ENCODE measurements at regions of chr3 and their contacts with region 1.

Region 1: GRCh38 chr3:197906023-197906849 is 43.8 kb upstream of the RPL35A start:
- DNase-seq: peak; percentile 93
- H3K4me3 Mint-ChIP-seq: peak overlapping the region; percentile 41
- H3K27ac Mint-ChIP-seq: peak overlapping the region; percentile 91
- H3K4me1 Mint-ChIP-seq: peaks cover 21% of the 10 kb centered on the region
- H3K27me3 Mint-ChIP-seq: no peaks in the 10 kb centered on the region

Region 2: DNA sequence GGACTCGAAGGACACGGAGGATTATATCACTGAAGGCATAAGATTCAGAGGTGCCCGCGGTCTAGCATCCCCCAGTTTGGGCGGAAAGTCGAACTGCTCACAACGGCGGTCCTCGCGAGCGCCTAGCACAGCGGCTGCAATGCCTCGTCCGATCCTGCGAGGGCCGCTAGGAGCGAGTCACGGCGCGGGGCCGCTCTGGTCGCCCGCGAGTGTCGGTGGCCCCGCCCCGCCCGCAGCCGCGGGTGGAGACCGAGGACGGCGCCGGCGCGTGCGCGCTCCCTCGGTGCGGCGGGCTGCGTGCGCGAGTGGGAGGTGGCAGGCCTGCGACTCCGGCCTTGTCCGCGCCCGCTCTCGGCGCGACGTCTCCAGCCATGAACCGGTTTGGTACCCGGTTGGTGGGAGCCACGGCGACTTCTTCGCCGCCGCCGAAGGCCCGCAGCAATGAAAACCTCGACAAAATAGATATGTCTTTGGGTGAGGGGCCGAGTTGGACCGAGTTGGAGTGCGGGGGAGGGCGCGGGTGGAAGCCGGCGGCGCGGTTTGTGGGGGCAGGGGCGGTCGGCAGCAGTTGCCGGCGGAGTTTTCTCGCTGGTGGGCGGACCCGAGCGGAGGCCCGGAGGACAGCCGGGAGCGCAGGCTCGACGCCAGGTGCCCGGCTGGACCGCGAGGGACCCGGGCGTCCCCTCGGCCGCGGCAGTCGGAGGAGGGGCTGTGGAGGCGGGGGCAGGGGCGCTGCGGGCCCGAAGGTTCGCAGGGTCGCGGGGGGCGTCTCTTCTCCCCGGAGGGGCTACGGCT is 156.4 kb before region 1 on chr3 and contains the start of gene FYTTD1:
- intact Hi-C with region 1: loop called (anchors 2 kb)
- DNase-seq: peak; percentile 97
- H3K4me3 Mint-ChIP-seq: peak within 1 kb of the TSS; percentile 92
- H3K27ac Mint-ChIP-seq: peak within 1 kb of the TSS; percentile 96
- H3K4me1 Mint-ChIP-seq: peaks cover 31% of the 10 kb centered on the region
- H3K27me3 Mint-ChIP-seq: peaks cover 4% of the 10 kb centered on the region
- total RNA-seq, gene FYTTD1: 53.2 and 56.8 TPM in 2 replicates

Region 3: GRCh38 chr3:197926418-197926817 is 20.2 kb after region 1 on chr3:
- intact Hi-C with region 1: loop called (anchors 1 kb)
- DNase-seq: no peak
- H3K4me3 Mint-ChIP-seq: no peak overlapping the region
- H3K27ac Mint-ChIP-seq: no peak overlapping the region
- H3K4me1 Mint-ChIP-seq: peaks cover 3% of the 10 kb centered on the region
- H3K27me3 Mint-ChIP-seq: no peaks in the 10 kb centered on the region

Region 4: DNA sequence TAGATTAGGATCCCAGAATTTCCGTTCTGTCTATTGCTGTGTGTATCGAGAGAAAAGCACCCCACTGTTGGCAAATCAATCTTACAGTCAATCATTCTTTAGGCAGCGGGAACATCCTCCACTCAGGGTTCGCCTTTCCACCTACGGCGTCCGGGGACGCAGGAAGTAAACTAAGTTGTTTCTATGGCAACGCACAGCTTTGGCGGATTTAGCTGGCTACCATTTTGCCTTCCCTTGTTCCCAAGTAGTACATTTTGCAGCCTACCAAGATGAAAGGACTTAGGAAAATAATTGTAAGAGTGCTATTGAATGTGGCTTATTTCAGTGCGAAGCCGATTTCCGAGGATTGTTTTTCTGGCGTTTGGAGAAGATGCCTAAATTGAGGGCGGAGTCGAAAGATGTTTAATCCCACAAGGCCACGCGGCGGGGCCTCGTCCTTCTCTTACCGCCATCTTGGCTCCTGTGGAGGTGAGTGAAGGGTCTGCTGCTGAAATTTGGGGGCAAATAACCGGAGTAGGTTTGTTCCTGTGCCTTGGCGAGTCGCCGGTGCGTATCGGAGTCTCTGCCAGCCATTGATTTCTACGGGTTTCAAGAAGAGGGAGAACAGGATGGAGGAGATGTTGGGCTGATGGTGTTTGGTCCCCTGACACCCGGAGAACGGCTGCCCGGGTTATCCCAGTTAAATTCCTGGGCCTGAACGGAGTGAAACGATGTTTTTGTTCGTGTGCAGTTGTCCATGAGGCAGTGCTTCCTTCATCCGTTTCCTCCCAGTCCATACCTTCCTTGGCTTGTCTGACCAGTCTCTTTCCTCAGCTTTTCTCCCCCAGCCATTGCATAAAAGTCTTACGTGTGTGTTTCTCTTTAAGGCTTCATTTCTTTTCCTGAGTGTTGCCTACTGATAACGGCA is 43.8 kb after region 1 on chr3 and contains the start of gene RPL35A:
- intact Hi-C with region 1: loop called (anchors 1 kb)
- DNase-seq: peak; percentile 95
- H3K4me3 Mint-ChIP-seq: peak within 1 kb of the TSS; percentile 99
- H3K27ac Mint-ChIP-seq: peak within 1 kb of the TSS; percentile 99
- H3K4me1 Mint-ChIP-seq: peaks cover 34% of the 10 kb centered on the region
- H3K27me3 Mint-ChIP-seq: peaks cover 2% of the 10 kb centered on the region
- total RNA-seq, gene RPL35A: 1,350 and 1,372 TPM in 2 replicates

Region 5: GRCh38 chr3:198028718-198029117 is 122.5 kb after region 1 on chr3:
- intact Hi-C with region 1: no loop called
- DNase-seq: no peak
- H3K4me3 Mint-ChIP-seq: no peak overlapping the region
- H3K27ac Mint-ChIP-seq: no peak overlapping the region
- H3K4me1 Mint-ChIP-seq: no peaks in the 10 kb centered on the region
- H3K27me3 Mint-ChIP-seq: no peaks in the 10 kb centered on the region

Region 6: DNA sequence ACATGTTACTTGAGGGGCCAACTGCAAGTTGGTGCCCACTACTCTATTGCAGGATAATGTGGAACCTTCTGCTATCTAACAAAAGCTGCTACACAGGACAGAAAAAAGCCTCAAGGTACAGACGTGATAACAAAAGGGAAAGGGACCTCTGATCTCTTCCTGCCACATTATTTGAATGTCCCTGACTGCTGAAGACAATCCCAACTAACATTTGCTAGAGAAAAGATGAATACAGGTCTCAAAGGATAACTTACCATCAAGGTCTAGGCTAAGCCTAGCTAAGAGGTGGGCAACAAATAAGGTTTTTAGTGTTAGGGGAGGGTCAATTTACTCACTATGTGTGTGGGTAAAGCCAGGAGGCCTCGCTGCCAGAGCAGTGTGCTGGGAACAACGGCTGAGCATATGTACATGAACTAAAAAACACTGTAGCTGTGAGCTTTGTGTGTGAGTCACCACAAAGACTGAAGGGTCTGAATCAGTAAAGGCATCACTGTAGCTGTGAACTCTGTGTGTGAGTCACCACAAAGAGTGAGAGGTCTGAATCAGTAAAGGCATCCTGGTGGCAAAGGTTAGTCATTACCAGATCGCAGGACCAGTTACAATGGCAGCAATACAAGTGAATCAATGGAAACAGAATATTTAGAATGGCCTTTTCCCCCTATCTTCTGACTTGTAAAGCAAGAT is 165.5 kb after region 1 on chr3:
- intact Hi-C with region 1: loop called (anchors 1 kb)
- DNase-seq: peak; percentile 78
- H3K4me3 Mint-ChIP-seq: peak overlapping the region; percentile 6
- H3K27ac Mint-ChIP-seq: peak overlapping the region; percentile 90
- H3K4me1 Mint-ChIP-seq: peaks cover 19% of the 10 kb centered on the region
- H3K27me3 Mint-ChIP-seq: peaks cover 28% of the 10 kb centered on the region

Measured in activated CD4-positive, alpha-beta T cell treated with anti-CD3 and anti-CD28 coated beads, Interleukin-2, amount 10 ng/mL, durations not matched to agents 24 days and 14 days (primary cell).